Posterior cingulate gyrus (tissue), 11 donors: ENCODE measurements at regions of chrX and their contacts with region 1.

Region 1: DNA sequence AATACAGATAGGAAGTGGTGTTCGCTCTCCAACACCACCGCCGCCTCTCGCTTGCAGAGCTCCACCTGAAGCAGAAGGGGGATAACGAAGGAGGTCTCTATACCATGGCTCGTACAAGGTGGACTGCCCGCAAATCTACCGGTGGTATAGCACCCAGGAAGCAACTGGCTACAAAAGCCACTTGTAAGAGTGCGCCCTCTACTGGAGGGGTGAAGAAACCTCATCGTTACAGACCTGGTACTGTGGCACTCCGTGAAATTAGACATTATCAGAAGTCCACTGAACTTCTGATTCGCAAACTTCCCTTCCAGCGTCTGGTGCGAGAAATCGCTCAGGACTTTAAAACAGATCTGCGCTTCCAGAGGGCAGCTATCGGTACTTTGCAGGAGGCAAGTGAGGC is 5.2 kb upstream of the BMP15 start:
- DNase-seq: no peak

Region 2: GRCh38 chrX:49958727-49959485 is 946.4 kb before region 1 on chrX:
- intact Hi-C with region 1: no loop called
- DNase-seq: no peak

Region 3: GRCh38 chrX:50680990-50681389 is 224.3 kb before region 1 on chrX:
- intact Hi-C with region 1: no loop called
- DNase-seq: peak in 2 of 10 donors; percentile 5 to 19

Region 4: GRCh38 chrX:50691820-50692219 is 213.5 kb before region 1 on chrX:
- intact Hi-C with region 1: loop called (anchors 10 kb)
- DNase-seq: no peak

Region 5: GRCh38 chrX:50747471-50747900 is 157.8 kb before region 1 on chrX:
- intact Hi-C with region 1: loop called (anchors 2 kb)
- DNase-seq: peak in 2 of 10 donors; percentile 21 to 32

Region 6: GRCh38 chrX:50827991-50828390 is 77.3 kb before region 1 on chrX:
- intact Hi-C with region 1: no loop called
- DNase-seq: no peak